Activated T-helper 1 cell treated with anti-CD3 and anti-CD28 coated beads, Interleukin-12 subunit alpha, Interleukin-12 subunit beta, Interleukin-2, Interleukin-4 antibody, amounts not matched to agents 30 ng/mL and 10 ng/mL and 1 ng/mL, durations not matched to agents 14 hours and 24 hours and 36 hours (primary cell): ENCODE measurements at regions of chr7 and their contacts with region 1.

Region 1: DNA sequence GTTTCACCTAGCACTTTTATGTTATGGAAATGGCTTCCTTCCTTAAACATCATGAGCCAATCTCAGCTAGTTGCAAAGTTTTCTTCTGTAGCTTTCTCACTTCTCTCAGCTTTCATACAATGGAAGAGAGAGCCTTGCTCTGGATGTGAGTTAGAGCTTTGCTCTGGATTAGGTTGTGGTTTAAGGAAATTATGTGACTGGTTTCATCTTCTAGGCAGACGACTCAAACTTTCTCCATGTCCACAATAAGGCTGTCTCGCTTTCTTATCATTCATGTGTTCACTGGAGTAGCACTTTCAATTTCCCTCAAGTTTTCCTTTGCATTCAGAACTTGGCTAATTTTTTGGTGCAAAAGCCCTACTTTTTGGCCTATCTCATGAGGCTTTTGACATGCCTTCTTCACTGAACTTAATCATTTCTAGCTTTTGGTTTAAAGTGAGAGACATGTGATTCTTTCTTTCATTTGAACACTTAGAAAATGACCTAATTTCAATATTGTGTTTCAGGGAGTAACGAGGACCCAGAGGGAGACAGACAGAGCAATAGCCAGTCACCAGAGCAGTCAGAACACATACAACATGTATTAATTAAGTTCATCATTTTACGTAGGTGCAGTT is 49.8 kb downstream of the CNOT4 start:
- DNase-seq: no peak
- H3K4me3 Mint-ChIP-seq: no peak overlapping the region
- H3K27ac Mint-ChIP-seq: no peak overlapping the region
- H3K4me1 Mint-ChIP-seq: peaks cover 18% of the 10 kb centered on the region
- H3K27me3 Mint-ChIP-seq: no peaks in the 10 kb centered on the region

Region 2: GRCh38 chr7:135320277-135320676 is 139.8 kb before region 1 on chr7:
- intact Hi-C with region 1: no loop called
- DNase-seq: no peak
- H3K4me3 Mint-ChIP-seq: no peak overlapping the region
- H3K27ac Mint-ChIP-seq: no peak overlapping the region
- H3K4me1 Mint-ChIP-seq: no peaks in the 10 kb centered on the region
- H3K27me3 Mint-ChIP-seq: no peaks in the 10 kb centered on the region

Region 3: DNA sequence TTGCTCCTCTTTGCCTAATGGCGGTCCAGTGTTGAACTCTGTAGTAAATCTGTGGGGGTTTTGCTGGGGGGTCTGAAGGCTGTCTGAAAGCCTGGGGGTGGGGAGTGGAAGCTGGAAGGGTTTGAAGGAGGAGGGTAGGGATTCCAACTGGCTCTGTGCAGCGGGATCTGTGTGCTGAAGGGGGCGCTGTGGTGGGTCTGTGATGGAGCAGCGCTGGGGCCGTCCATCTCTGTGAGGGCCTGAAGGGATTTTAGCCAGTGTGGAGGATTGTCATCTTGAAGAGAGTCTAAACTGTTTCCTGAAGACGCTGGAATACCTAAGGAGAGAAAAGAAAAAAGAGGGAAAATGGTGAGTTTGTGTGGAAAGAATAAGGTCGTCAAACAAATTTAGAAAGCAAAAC is 97.2 kb before region 1 on chr7:
- intact Hi-C with region 1: no loop called
- DNase-seq: no peak
- H3K4me3 Mint-ChIP-seq: no peak overlapping the region
- H3K27ac Mint-ChIP-seq: no peak overlapping the region
- H3K4me1 Mint-ChIP-seq: no peaks in the 10 kb centered on the region
- H3K27me3 Mint-ChIP-seq: no peaks in the 10 kb centered on the region

Region 4: DNA sequence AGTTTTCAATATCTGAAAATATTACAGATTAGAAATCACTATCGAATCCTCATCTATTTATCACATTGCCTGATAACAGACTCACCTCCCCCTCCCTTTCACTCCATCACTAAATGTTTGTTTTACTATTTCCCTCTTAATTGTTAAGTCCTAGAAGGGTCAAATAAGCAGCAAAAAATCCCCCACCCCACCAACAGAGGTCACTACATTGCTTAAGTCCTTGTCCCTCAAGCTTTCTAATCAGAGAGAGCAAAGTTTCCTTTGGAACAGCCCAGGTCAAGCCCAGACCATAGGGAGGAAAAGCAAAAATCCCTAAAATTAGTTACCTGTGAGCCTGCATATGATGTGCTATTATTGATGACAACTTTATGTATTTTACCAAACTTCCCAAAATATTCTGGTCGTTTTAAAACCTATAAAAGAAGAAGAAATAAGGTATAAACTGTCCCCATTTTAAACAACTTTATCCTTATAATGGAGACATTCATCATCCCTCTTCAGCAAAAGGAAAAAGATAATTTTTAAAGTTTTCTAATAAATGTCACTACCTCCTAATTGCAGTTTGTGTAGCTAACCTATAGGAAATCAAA is 45.1 kb before region 1 on chr7:
- intact Hi-C with region 1: loop called (anchors 5 kb)
- DNase-seq: no peak
- H3K4me3 Mint-ChIP-seq: no peak overlapping the region
- H3K27ac Mint-ChIP-seq: no peak overlapping the region
- H3K4me1 Mint-ChIP-seq: peaks cover 6% of the 10 kb centered on the region
- H3K27me3 Mint-ChIP-seq: no peaks in the 10 kb centered on the region